SK-MEL-5 (cell line): ENCODE measurements at regions of chr7 and their contacts with region 1.

Region 1: GRCh38 chr7:106542550-106543220 is 118.3 kb downstream of the CCDC71L start:
- DNase-seq: peak; percentile 97

Region 2: DNA sequence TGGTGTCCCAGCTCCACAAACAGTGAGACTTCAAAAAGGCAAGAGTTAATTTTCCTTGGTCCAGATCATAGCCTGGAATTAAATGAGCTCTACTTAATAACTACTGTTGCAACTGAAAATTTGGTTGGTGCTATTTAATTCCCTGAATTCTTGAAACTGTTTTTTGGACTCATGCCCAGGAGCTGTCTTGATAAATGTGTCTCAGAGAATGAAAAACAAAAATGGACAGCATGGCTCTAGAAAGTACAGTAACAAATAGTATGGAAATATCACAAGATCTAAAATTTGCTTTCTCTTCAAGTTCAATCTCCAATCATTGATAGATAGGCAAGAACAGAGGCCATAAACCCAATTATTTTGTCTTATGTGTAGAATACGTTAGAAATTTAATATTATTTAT is 75.8 kb after region 1 on chr7:
- in situ Hi-C with region 1: loop called (anchors 10 kb)
- DNase-seq: no peak

Region 3: GRCh38 chr7:106736508-106737201 is 194.0 kb after region 1 on chr7:
- in situ Hi-C with region 1: loop called (anchors 10 kb)
- DNase-seq: peak; percentile 98